MCF 10A (cell line): ENCODE measurements at regions of chr18 and their contacts with region 1.

Region 1: DNA sequence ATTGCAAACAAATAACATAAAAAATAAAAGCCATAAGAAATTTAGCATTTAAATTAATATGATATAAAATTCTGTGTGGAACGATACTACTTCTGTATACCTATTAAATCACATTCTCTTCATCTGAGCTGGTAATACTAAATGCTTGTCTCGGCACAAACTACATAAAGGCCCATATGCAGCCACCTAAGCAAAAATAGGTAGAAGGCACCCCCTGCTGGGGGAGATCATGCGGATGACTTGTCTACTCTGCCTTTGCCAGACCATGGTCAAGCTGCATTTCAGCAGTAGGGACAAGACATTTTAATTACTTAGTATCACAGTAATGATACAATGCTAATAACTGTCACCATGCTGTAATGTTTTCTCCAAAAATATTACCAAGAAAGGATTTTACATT is 108.0 kb downstream of the CDH19 start:
- DNase-seq: peak; percentile 81
- H3K4me3 Mint-ChIP-seq: no peak overlapping the region
- H3K27ac Mint-ChIP-seq: no peak overlapping the region
- H3K4me1 Mint-ChIP-seq: no peaks in the 10 kb centered on the region
- H3K27me3 Mint-ChIP-seq: peaks cover 31% of the 10 kb centered on the region
- CTCF ChIP-seq: peak; percentile 57

Region 2: DNA sequence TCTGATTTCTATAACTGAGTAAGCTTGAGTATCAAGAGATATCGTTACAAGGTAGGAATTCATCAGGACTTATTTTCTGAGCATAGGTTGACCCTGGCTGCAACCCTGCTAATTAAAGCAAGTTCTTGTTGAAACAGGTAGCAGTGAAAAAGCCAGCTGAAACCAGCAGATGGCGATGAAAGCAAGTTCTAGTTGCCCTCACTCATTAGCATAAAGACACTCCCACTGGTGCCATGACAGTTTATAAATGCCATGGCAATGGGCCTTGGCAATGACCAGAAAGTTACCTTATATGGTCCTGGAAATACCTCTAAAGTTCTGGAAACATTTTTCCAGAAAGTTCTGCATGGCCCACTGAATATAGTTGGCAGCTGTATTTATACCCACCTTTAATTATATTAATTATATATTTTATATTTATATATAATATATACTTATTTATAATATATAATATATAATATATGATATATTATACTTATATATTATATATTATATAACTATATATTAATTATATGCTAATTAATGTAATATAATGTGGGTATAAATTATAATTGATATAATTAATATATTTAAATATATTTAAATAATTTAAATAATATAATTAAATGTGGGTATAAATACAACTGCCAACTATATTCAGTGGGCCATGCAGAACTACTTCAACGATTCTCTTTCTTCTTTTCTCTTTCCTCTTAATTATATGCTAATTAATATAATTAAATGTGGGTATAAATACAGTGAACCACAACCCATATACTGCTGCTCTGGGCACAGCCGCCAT is 557.1 kb before region 1 on chr18:
- CTCF ChIA-PET with region 1: interaction called, 5 read pairs
- POLR2A ChIA-PET with region 1: no interaction called
- intact Hi-C with region 1: loop called (anchors 1 kb)
- DNase-seq: peak; percentile 65
- H3K4me3 Mint-ChIP-seq: no peak overlapping the region
- H3K27ac Mint-ChIP-seq: no peak overlapping the region
- H3K4me1 Mint-ChIP-seq: no peaks in the 10 kb centered on the region
- H3K27me3 Mint-ChIP-seq: peaks cover 18% of the 10 kb centered on the region
- CTCF ChIP-seq: peak; percentile 33

Region 3: DNA sequence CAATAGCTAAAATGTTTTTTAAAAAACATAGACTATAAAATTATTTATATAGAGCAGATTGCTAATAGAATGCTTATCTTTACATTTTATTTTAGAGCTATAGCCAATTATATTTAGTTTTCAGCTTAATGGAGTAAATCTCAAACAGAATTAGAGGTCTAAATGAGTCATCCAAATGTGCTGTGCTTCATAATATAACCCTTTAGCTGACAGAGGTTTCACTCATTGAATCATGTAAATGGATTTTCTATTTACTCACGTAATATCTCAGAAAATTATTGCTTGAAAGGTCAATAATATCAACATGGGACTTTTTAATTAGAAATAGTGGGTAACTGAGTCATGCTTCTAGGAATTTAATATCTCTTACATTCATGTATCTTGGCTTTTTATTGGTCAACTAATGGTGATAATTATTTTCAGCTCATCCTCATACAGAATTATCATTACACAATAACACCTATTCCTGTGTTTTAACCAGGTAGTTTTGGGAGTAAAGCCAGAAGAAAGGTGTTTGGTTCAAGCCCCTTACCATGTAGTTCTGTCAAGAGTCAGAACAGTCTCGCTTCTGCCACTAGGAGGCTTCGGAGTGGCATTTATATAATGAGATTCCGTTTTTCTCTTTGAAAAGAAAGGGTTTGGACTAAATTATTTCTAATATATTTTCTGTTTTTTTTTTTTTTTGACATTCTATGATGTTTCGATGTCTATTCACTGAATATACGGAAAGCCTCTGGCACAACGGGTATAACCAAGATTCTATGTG is 527.4 kb before region 1 on chr18:
- CTCF ChIA-PET with region 1: no interaction called
- POLR2A ChIA-PET with region 1: no interaction called
- intact Hi-C with region 1: loop called (anchors 10 kb)
- DNase-seq: peak; percentile 13
- H3K4me3 Mint-ChIP-seq: no peak overlapping the region
- H3K27ac Mint-ChIP-seq: no peak overlapping the region
- H3K4me1 Mint-ChIP-seq: no peaks in the 10 kb centered on the region
- H3K27me3 Mint-ChIP-seq: peaks cover 30% of the 10 kb centered on the region
- CTCF ChIP-seq: peak; percentile 19

Region 4: GRCh38 chr18:66124394-66124793 is 371.4 kb before region 1 on chr18:
- CTCF ChIA-PET with region 1: interaction called, 3 read pairs
- POLR2A ChIA-PET with region 1: no interaction called
- intact Hi-C with region 1: loop called (anchors 5 kb)
- DNase-seq: peak; percentile 24
- H3K4me3 Mint-ChIP-seq: no peak overlapping the region
- H3K27ac Mint-ChIP-seq: no peak overlapping the region
- H3K4me1 Mint-ChIP-seq: no peaks in the 10 kb centered on the region
- H3K27me3 Mint-ChIP-seq: peaks cover 13% of the 10 kb centered on the region
- CTCF ChIP-seq: no peak

Region 5: GRCh38 chr18:66138642-66139041 is 357.2 kb before region 1 on chr18:
- CTCF ChIA-PET with region 1: no interaction called
- POLR2A ChIA-PET with region 1: no interaction called
- intact Hi-C with region 1: no loop called
- DNase-seq: no peak
- H3K4me3 Mint-ChIP-seq: no peak overlapping the region
- H3K27ac Mint-ChIP-seq: no peak overlapping the region
- H3K4me1 Mint-ChIP-seq: no peaks in the 10 kb centered on the region
- H3K27me3 Mint-ChIP-seq: peaks cover 12% of the 10 kb centered on the region
- CTCF ChIP-seq: no peak

Region 6: GRCh38 chr18:66440433-66440832 is 55.4 kb before region 1 on chr18:
- CTCF ChIA-PET with region 1: no interaction called
- POLR2A ChIA-PET with region 1: no interaction called
- intact Hi-C with region 1: no loop called
- DNase-seq: no peak
- H3K4me3 Mint-ChIP-seq: no peak overlapping the region
- H3K27ac Mint-ChIP-seq: no peak overlapping the region
- H3K4me1 Mint-ChIP-seq: no peaks in the 10 kb centered on the region
- H3K27me3 Mint-ChIP-seq: no peaks in the 10 kb centered on the region
- CTCF ChIP-seq: no peak

Region 7: GRCh38 chr18:66749030-66749429 is 253.2 kb after region 1 on chr18:
- CTCF ChIA-PET with region 1: no interaction called
- POLR2A ChIA-PET with region 1: no interaction called
- intact Hi-C with region 1: loop called (anchors 1 kb)
- DNase-seq: peak; percentile 30
- H3K4me3 Mint-ChIP-seq: no peak overlapping the region
- H3K27ac Mint-ChIP-seq: no peak overlapping the region
- H3K4me1 Mint-ChIP-seq: no peaks in the 10 kb centered on the region
- H3K27me3 Mint-ChIP-seq: peaks cover 18% of the 10 kb centered on the region
- CTCF ChIP-seq: no peak